ENCODE measurements at regions of chr6 and their contacts with region 1.

Region 1: DNA sequence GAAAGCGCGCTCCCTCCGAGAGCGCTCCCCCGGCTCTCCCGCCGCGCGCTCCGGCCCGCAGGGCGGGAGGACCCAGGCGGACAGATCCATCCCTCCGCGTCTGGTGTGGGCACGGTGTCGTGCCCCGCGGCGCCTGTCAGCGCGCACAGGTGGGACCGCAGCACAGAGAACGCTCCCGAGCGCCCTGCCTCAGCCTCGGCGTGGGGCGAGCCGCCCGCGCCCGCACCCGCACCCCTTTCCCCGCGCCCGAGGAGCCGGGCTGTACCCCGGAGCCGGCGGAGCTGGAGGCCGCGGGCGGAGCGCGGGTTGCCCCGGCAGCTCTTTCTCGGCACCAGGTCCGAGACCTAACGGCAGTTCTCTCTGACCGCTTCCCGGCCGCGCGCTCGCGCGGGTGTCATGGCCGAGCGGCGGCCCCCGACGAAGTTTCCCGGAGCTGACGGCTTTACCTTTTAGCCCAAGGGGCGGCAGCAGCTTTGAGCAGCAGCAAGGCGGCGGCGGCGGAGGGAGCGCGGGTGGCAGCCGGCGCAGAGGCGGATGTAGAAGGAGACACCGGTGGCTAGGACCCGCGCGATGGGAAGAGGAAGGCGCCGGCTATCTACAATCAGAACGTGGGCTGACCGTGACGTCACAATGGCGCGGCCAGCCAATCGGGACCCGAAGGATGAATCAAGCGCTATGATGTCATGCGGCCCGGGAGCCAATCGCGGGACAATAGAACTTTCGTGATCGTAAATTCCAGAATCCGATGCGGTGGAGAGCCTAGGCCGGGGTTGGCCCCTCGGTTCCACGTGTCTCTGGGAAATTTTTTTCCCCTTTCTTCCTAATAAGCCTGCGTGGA is at the start of gene ELOVL5:
- DNase-seq: peak; percentile 99
- H3K4me3 Mint-ChIP-seq: peak within 1 kb of the TSS; percentile 80
- H3K27ac Mint-ChIP-seq: peak within 1 kb of the TSS; percentile 89
- H3K4me1 Mint-ChIP-seq: peaks cover 47% of the 10 kb centered on the region
- H3K27me3 Mint-ChIP-seq: no peaks in the 10 kb centered on the region
- total RNA-seq, gene ELOVL5: 132 to 136 TPM

Region 2: DNA sequence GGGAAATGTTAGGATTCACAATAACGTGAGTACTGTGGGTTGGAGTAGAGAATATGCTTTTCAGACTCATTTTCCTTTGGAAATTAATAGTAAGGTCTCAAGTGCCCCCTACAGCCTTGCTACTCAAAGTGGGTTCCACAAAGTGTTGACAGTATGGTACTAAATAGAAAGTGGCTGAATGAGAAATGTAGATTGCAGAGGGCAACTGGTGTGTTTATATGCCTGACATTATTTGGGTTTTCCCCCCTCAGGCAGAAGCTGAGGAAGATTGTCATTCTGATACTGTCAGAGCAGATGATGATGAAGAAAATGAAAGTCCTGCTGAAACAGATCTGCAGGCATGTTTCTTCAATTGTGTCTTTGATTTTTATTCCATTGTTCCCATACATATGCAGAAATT is 277.8 kb before region 1 on chr6:
- CTCF ChIA-PET with region 1: no interaction called
- intact Hi-C with region 1: loop called (anchors 2 kb)
- DNase-seq: peak; percentile 56
- H3K4me3 Mint-ChIP-seq: no peak overlapping the region
- H3K27ac Mint-ChIP-seq: no peak overlapping the region
- H3K4me1 Mint-ChIP-seq: peaks cover 42% of the 10 kb centered on the region
- H3K27me3 Mint-ChIP-seq: no peaks in the 10 kb centered on the region

Region 3: DNA sequence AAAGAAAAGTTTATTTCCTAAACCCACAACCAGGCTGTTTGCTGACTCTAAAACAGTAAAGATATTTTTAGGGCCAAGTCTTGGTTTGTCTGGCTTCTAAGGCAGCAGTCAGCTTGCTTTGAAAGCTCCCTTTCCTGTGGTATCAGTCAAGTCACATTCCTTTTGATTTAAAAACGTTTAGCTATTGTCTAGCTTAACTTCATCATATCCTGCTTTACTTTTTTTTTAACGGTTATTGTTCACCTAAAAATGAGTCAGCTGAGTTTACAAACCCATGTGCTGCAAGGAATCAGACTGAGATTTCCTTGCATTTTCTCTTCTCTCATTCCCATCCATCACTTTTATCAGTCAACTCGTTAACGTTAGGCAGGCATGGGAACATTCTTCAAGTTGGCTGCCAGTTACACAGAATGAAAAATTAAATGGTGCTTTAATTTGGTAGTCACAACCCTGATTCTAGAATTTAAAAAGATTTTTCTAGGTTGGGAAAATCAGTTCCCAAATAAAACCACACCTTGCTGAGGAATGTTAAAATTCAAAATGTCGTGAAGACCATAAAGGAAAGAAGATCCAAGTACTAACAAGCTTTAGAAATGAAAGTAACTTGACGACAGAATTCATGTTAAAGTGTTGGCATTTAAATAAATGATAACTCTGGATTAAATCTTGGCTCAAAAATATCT is 45.8 kb before region 1 on chr6:
- CTCF ChIA-PET with region 1: interaction called, 8 read pairs
- intact Hi-C with region 1: loop called (anchors 1 kb)
- DNase-seq: no peak
- H3K4me3 Mint-ChIP-seq: peak overlapping the region; percentile 28
- H3K27ac Mint-ChIP-seq: peak overlapping the region; percentile 48
- H3K4me1 Mint-ChIP-seq: peaks cover 76% of the 10 kb centered on the region
- H3K27me3 Mint-ChIP-seq: no peaks in the 10 kb centered on the region

Region 4: GRCh38 chr6:53335208-53335994 is 13.2 kb before region 1 on chr6:
- CTCF ChIA-PET with region 1: interaction called, 4 read pairs
- intact Hi-C with region 1: loop called (anchors 1 kb)
- DNase-seq: peak; percentile 79
- H3K4me3 Mint-ChIP-seq: peak overlapping the region; percentile 80
- H3K27ac Mint-ChIP-seq: peak overlapping the region; percentile 99
- H3K4me1 Mint-ChIP-seq: peaks cover 85% of the 10 kb centered on the region
- H3K27me3 Mint-ChIP-seq: no peaks in the 10 kb centered on the region

Region 5: GRCh38 chr6:53410508-53411258 is 62.1 kb after region 1 on chr6:
- CTCF ChIA-PET with region 1: interaction called, 5 read pairs
- intact Hi-C with region 1: loop called (anchors 1 kb)
- DNase-seq: peak; percentile 70
- H3K4me3 Mint-ChIP-seq: no peak overlapping the region
- H3K27ac Mint-ChIP-seq: no peak overlapping the region
- H3K4me1 Mint-ChIP-seq: no peaks in the 10 kb centered on the region
- H3K27me3 Mint-ChIP-seq: no peaks in the 10 kb centered on the region